ENCODE measurements at regions of chr17 and their contacts with region 1.

Region 1: DNA sequence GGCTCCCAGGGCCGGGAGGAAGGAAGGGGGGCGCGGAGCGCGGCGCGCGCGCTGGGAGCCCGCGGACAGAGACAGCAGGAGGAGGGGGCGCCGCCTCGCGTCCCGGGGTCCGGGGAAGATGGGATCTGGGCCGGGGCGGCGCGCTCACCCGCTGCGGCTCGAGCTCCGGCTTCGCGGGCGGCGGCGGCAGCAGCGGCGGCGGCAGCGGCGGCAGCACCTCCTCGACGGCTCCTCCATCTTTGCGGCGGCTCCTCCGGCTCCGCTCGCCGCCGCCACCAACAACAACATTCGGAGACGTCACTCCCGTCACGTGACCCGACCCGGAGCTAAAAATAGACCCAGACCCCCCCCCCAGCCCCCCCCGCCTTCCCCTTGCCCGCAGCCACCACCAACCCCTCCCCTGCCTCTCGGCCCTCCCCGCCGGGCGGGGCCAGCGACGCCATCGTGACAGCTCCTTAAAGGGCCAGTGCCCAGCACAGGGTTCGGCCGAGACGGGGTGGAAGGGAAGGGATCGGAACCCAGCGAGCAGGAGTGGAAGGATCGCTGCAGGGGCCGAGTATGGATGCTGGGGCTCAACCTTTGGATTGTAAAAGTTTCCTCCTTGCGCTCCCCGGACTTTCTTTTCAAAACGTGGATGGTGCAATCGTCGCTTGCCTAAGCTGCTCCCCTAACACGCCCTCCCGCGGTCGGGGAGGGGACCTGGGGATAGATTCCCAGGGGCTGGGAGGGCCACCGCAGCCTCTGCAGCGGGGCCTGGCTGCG is at the start of gene HDAC5:
- DNase-seq: peak; percentile 89
- H3K4me3 ChIP-seq: peak within 1 kb of the TSS; percentile 62 to 67 (median 65)
- H3K27ac ChIP-seq: peak within 1 kb of the TSS; percentile 90
- H3K4me1 ChIP-seq: peaks cover 18% of the 10 kb centered on the region
- H3K27me3 ChIP-seq: no peaks in the 10 kb centered on the region
- CTCF ChIP-seq: peak; percentile 36 to 75
- total RNA-seq, gene HDAC5: 9.9 to 21.8 TPM

Region 2: GRCh38 chr17:44086364-44087311 is 36.9 kb before region 1 on chr17:
- CTCF ChIA-PET with region 1: interaction called, 7 read pairs
- dilution Hi-C with region 1: no loop called
- in situ Hi-C with region 1: no loop called
- intact Hi-C with region 1: loop called (anchors 5 kb)
- DNase-seq: peak; percentile 88
- H3K4me3 ChIP-seq: no peak overlapping the region
- H3K27ac ChIP-seq: peak overlapping the region; percentile 56
- H3K4me1 ChIP-seq: peaks cover 27% of the 10 kb centered on the region
- H3K27me3 ChIP-seq: no peaks in the 10 kb centered on the region
- CTCF ChIP-seq: no peak

Region 3: DNA sequence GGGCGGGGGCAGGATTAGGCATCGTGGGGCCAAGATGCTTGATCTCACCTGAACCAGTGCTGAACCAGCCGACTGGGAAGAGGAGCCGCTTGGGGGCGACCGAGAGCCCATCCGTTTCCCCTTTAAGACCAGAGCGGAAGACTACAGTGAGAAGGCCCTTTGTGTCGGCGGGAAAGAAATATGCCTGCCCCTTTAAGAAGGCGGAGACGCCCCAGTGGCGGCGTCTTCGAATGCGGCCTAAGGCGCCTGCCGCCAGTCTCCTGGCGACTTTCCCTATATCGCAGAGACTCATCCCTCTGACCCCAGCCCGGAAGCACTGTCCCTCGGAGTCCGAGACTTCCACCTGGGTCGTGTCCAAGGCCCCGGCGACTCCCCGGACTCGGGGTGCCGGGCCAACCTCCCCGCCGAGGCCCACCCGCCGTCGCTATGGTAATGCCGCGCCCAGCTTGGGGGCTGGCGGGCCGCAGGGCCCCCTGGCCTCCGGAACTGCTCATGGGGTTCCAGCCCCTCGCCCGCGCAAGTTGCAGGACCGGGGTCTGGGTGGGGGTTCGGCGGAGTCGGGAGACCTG is 18.3 kb after region 1 on chr17 and contains the start of gene HROB:
- CTCF ChIA-PET with region 1: interaction called, 4 read pairs
- dilution Hi-C with region 1: no loop called
- in situ Hi-C with region 1: no loop called
- intact Hi-C with region 1: loop called (anchors 1 kb)
- DNase-seq: peak; percentile 93
- H3K4me3 ChIP-seq: peak within 1 kb of the TSS; percentile 82 to 87 (median 86)
- H3K27ac ChIP-seq: peak within 1 kb of the TSS; percentile 92
- H3K4me1 ChIP-seq: peaks cover 24% of the 10 kb centered on the region
- H3K27me3 ChIP-seq: no peaks in the 10 kb centered on the region
- CTCF ChIP-seq: peak; percentile 93 to 95
- total RNA-seq, gene HROB: 3.0 to 10.3 TPM

Region 4: GRCh38 chr17:44331249-44331760 is 207.8 kb after region 1 on chr17:
- CTCF ChIA-PET with region 1: no interaction called
- dilution Hi-C with region 1: no loop called
- in situ Hi-C with region 1: no loop called
- intact Hi-C with region 1: loop called (anchors 10 kb)
- DNase-seq: peak; percentile 53
- H3K4me3 ChIP-seq: no peak overlapping the region
- H3K27ac ChIP-seq: no peak overlapping the region
- H3K4me1 ChIP-seq: no peaks in the 10 kb centered on the region
- H3K27me3 ChIP-seq: no peaks in the 10 kb centered on the region
- CTCF ChIP-seq: peak; percentile 79 to 82

Measured in mammary epithelial cell (primary cell).